Psoas muscle (tissue), 8 donors: ENCODE measurements at regions of chr3 and their contacts with region 1.

Region 1: GRCh38 chr3:133661454-133662277 is at the start of gene TOPBP1:
- DNase-seq: peak; percentile 80 to 88
- ATAC-seq: peak; percentile 90 to 98 (median 92)
- H3K4me3 ChIP-seq: peak within 1 kb of the TSS; percentile 85
- H3K27ac ChIP-seq: peak within 1 kb of the TSS; percentile 86
- H3K4me1 ChIP-seq: peaks cover 12% of the 10 kb centered on the region
- H3K27me3 ChIP-seq: no peaks in the 10 kb centered on the region
- CTCF ChIP-seq: no peak
- total RNA-seq, gene TOPBP1: 6.7 to 10.5 (median 8.4) TPM

Region 2: DNA sequence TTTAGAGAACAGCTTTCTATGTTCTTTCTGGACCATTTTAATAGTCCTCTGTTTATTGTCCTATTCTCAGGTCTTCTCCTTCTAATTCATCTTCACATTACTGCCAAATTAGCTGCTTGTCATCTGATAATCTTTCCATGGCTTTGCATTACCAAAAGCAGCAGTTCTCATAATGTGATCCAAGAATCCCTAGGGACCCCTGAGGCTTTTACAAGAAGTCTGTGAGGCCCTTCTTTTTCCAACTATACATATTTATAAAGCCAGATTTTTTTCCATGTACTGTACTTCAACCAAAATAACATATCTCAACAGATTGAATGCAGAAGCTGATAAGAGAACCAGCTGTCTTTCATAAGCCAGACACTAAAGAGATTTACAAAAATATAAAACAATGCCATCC is 424.3 kb before region 1 on chr3:
- intact Hi-C with region 1: no loop called
- DNase-seq: no peak
- ATAC-seq: no peak
- H3K4me3 ChIP-seq: no peak overlapping the region
- H3K27ac ChIP-seq: no peak overlapping the region
- H3K4me1 ChIP-seq: no peaks in the 10 kb centered on the region
- H3K27me3 ChIP-seq: no peaks in the 10 kb centered on the region
- CTCF ChIP-seq: no peak

Region 3: DNA sequence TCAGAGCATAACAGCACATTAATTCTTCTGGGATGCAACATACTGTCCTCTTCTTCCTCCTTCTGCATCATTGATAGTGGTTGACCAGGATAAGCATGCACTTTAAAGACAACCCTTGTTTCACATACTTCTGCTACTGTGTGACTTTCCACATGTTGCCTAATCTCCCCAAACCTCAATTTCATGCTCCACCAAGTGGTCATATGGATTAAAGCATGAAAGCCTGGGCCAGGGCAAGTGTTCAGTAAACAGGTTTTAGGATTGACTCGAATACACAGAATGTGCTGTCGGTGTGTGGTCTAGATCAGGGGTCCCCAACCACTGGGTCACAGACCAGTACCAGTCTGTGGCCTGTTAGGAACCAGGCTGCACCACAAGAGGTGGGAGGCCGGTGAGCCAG is 284.3 kb before region 1 on chr3:
- intact Hi-C with region 1: no loop called
- DNase-seq: no peak
- ATAC-seq: peak in 3 of 4 donors; percentile 35 to 74 (median 52)
- H3K4me3 ChIP-seq: no peak overlapping the region
- H3K27ac ChIP-seq: no peak overlapping the region
- H3K4me1 ChIP-seq: no peaks in the 10 kb centered on the region
- H3K27me3 ChIP-seq: no peaks in the 10 kb centered on the region
- CTCF ChIP-seq: peak; percentile 25

Region 4: GRCh38 chr3:133709139-133709750 is 47.6 kb after region 1 on chr3:
- intact Hi-C with region 1: no loop called
- DNase-seq: no peak
- ATAC-seq: no peak
- H3K4me3 ChIP-seq: no peak overlapping the region
- H3K27ac ChIP-seq: no peak overlapping the region
- H3K4me1 ChIP-seq: no peaks in the 10 kb centered on the region
- H3K27me3 ChIP-seq: peaks cover 0 to 4% (median 0%) of the 10 kb centered on the region in 3 donors
- CTCF ChIP-seq: no peak

Region 5: DNA sequence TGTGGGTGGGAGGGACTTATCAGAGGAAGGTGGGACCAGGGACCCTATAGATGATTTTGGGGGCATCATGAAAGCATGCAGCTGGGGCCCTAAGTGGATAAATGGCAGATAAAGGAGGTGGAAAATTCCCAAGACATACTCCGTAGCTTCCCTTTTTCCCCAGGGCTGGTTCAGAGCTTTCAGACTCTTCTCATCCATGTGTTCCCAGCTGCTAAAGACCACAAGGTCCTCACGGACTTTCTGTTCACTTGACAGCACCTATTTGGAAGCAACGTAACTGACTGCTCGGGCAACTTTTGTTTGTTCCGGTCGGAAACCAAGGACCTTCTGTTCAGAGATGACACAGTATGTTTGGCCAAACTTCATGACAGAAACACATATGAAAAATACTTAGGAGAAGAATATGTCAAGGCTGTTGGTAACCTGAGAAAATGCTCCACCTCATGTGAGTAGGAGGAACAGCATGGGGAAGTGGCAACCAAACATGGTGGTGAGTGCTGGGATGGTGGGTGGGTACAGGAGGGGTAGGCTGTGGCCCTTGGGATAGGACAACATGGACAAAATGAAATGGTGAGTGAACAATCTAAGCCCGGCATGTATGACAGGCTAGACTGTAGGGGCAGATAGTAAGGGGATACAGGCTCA is 115.2 kb after region 1 on chr3:
- intact Hi-C with region 1: no loop called
- DNase-seq: no peak
- ATAC-seq: no peak
- H3K4me3 ChIP-seq: no peak overlapping the region
- H3K27ac ChIP-seq: no peak overlapping the region
- H3K4me1 ChIP-seq: no peaks in the 10 kb centered on the region
- H3K27me3 ChIP-seq: no peaks in the 10 kb centered on the region
- CTCF ChIP-seq: no peak

Region 6: DNA sequence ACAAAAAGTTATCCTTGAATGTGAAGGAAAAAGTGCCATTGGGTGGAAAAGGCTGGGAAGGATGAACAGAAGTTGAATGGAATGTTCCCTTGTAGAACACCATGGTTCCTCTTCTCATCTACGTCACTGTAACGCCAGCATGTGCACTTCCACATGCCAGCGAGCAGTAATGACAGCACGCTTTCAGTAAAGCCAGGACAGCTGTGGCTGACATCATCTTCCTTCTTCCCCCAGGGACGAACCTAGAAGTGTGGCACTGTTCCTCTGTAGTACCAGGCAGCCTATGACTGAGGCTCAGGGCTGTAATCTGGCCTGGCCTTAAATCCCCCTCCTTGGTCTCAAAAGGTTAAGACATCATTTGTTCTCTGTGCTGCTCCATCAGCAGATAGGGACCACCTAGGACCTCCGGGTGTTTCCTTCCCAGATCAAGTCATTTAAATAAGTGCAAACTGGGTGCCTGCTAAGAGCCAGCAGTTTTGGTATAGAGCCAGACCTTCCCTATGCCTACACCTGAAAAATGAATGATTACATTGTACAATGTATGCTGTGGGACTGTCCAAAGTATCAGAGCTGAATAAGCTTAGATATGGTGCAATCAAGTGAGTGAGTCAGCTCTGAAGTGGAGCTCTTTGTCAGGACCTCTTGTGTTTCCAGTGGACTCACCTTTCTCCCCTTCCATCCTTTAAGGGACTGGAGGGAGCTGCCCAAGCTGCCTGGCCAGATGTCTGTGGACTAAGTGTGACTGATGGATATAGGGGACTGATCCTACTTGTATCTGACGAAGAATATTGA is 138.3 kb after region 1 on chr3:
- intact Hi-C with region 1: loop called (anchors 5 to 10 kb)
- DNase-seq: no peak
- ATAC-seq: peak; percentile 44 to 66 (median 52)
- H3K4me3 ChIP-seq: no peak overlapping the region
- H3K27ac ChIP-seq: no peak overlapping the region
- H3K4me1 ChIP-seq: no peaks in the 10 kb centered on the region
- H3K27me3 ChIP-seq: no peaks in the 10 kb centered on the region
- CTCF ChIP-seq: no peak

Region 7: DNA sequence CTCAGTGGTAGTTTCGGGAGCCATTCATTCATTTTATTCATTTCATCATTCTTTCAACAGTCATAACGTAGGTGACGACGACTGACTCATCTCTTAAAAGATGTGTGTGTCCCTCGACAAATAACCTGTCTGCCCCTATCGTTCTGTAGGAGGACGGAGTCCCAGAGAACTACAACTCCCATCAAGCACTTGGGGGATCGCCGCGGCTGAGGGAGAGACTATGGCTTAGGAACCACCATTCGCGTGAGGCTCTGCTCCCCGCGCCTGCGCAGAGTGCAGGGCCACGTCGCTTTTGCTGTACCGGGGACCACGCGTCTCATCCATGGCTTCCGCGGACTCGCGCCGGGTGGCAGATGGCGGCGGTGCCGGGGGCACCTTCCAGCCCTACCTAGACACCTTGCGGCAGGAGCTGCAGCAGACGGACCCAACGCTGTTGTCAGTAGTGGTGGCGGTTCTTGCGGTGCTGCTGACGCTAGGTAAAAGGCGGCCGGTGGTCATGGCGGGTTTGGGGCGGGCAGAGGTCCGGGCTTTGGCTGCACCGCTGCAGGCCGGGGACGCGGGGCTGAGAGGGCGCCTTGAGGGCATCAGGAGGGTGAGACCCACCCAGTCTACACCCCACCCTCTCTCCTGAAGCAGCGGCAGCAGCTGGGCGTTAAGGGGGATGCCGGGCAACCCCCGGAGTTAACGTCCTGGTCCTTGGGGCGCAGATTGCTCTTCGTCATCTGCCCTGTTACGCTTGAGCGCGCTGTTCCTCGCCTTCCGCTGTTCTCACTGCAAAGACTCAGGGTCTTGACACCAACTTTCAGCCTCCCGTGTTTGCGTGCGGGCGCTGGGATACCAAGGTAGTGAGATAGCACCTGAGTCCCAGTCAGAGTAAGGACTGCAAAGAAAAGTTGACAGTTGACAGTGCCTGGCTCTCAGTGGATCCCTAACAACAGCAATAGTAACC is 144.1 kb after region 1 on chr3 and contains the start of gene SRPRB:
- intact Hi-C with region 1: loop called in 1 of 2 experiments (anchors 5 kb)
- DNase-seq: peak; percentile 95 to 97
- ATAC-seq: peak; percentile 100
- H3K4me3 ChIP-seq: peak within 1 kb of the TSS; percentile 85
- H3K27ac ChIP-seq: peak within 1 kb of the TSS; percentile 75
- H3K4me1 ChIP-seq: no peaks in the 10 kb centered on the region
- H3K27me3 ChIP-seq: no peaks in the 10 kb centered on the region
- CTCF ChIP-seq: no peak
- total RNA-seq, gene SRPRB: 28.0 to 52.3 (median 43.1) TPM